ENCODE measurements at regions of chr2 and their contacts with region 1.

Region 1: DNA sequence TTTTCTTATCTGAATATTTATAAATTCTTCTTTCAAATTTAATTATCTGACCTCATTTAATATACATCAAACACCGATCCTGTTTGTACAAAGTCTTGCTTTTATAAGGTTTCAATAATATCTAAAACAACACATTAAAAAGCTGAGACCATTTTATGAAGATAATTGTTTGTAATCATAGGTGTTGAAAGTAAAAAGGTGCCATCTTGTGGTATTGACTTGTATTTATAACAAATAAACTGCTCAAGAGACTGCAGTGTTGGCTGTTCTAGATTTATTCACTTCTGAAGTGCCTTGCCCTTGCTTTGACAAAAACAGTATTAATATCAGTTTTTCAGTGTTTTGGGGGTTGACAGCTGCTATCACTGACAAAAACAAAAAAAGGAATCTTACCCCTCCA is 286.8 kb upstream of the HNMT start:
- DNase-seq: no peak
- ATAC-seq: no peak
- H3K4me3 ChIP-seq: no peak overlapping the region
- H3K27ac ChIP-seq: no peak overlapping the region
- H3K4me1 ChIP-seq: no peaks in the 10 kb centered on the region
- H3K27me3 ChIP-seq: no peaks in the 10 kb centered on the region
- CTCF ChIP-seq: peak in 2 of 9 donors; percentile 20 to 25

Region 2: DNA sequence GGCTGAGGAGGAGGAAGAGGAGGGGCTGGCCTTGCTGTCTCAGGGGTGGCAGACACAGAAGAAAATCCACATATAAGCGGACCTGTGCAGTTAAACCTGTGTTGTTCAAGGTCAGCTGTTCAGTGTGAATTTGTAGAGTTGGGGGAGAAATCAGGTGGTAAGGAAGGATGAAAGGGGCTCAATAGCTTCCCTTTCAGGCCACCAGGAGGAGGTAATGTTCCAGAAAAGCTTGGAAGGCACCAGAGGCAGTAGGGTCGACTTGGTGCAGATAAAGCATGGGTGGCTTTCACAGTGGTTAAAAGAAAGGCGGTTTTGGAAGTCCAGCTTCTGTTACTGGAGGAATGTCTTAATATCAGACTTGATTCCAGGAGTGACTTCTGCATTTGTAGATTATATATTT is 744.8 kb before region 1 on chr2:
- intact Hi-C with region 1: loop called in 1 of 10 experiments (anchors 10 kb)
- DNase-seq: no peak
- ATAC-seq: no peak
- H3K4me3 ChIP-seq: no peak overlapping the region
- H3K27ac ChIP-seq: no peak overlapping the region
- H3K4me1 ChIP-seq: no peaks in the 10 kb centered on the region
- H3K27me3 ChIP-seq: no peaks in the 10 kb centered on the region
- CTCF ChIP-seq: peak in 7 of 9 donors; percentile 12 to 48 (median 38)

Region 3: DNA sequence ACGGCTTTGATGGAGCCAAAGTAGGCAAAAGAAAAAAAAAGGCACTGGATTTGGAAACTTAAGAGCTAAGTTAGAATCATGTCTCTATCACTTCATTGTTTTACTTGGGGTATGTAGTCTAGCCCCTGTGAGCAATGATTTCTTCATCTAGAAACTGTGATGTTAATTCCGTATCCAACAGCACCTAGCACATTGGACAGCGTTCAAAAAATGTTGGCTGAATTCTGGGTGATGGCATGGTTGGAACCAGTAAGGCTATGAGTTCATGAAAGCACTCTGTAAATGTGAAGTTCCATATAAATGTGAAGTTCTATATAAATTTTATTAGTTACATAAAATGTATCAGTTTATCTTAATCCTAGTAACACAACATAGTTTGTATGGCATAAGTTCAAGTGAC is 21.6 kb before region 1 on chr2:
- intact Hi-C with region 1: no loop called
- DNase-seq: no peak
- ATAC-seq: no peak
- H3K4me3 ChIP-seq: no peak overlapping the region
- H3K27ac ChIP-seq: no peak overlapping the region
- H3K4me1 ChIP-seq: no peaks in the 10 kb centered on the region
- H3K27me3 ChIP-seq: no peaks in the 10 kb centered on the region
- CTCF ChIP-seq: no peak

Measured in heart right ventricle (tissue), 16 donors.